A549 (cell line): ENCODE measurements at regions of chr10 and their contacts with region 1.

Region 1: DNA sequence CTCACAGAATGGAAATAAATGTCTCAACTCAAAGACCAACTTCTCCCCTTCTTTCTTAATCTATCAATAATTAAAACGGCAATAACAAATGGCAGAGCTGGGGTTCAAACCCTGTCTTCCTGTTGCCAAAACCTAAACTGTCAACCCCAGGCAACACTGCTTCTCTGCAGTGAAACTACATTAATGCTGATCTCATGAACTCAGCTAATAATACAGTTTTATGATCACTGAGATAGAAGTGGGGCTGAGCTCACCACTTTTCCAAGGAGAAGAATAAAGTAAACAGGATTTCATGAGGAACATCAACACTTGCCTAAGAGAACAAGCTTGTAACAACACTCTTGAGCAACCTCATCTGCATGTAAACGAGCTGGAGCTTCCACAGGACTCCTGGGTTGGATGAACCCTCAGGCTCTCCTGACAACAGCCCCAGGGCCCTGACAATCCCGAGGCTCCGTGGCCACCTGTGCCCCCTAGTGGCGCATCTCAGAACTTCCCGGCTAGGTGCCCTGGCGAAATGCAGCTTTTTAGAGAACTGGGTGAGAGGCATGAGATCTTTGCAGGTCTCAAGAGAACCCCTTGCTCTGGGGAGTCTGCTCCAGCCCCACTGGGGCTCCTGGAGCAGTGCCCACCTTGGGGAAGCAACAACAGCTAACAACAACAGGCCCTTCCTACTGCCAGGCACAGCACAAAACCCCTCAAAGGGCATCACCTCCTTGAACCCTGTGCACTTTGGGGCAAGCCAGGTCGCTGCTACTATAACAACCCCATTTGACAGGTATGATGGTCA is 169.3 kb downstream of the SH3PXD2A start:
- DNase-seq: peak; percentile 55 to 91
- ATAC-seq: peak; percentile 79 to 90
- H3K4me3 ChIP-seq: no peak overlapping the region
- H3K27ac ChIP-seq: no peak overlapping the region
- H3K4me1 ChIP-seq: peaks cover 14% of the 10 kb centered on the region
- CTCF ChIP-seq: peak; percentile 79
- EP300 ChIP-seq: no peak
- POLR2A ChIP-seq: no peak
- RAD21 ChIP-seq: peak; percentile 73 to 79

Region 2: DNA sequence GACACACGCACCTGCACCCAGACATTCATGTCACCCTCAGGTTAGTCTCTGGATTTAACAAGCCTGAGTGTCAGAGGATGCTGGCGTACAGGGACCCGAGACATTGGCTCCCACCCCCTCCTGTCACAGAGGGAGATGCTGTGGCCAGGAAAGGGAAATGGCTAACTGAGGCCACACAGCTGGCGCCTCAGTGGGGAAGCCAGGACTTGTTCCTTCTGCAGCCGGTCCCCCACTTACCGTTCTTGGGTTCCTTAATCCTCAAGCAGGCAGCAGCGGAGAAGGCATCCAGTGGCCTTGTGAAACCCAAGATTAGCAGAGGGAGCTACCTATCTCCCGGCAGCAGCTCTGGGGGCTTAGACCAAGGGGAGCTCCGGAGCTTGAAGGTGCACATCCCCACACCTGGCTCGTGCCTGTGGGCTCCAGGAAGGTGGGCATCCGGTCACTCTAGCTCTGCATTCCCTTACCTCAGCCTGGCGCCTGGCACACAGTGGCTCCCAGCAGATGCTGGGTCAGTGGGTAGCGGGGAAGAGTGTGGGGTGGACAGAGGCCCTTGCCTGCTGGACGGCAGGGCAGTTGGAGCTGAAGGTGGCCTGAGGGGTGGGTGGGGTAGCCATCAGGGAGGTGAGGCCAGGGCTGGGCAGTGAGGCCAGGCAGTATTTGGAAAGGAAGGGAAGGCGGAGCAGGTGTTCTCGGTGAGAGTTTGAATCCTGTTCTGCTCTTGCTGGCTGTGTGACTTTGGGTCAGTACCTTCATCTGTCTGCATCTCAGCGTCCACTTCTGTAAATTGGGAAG is 127.0 kb before region 1 on chr10:
- CTCF ChIA-PET with region 1: no interaction called
- POLR2A ChIA-PET with region 1: no interaction called
- DNase-seq: no peak
- ATAC-seq: no peak
- H3K4me3 ChIP-seq: no peak overlapping the region
- H3K27ac ChIP-seq: no peak overlapping the region
- H3K4me1 ChIP-seq: peaks cover 9% of the 10 kb centered on the region; the same call in 2 of the 3 replicates
- CTCF ChIP-seq: no peak
- EP300 ChIP-seq: no peak
- POLR2A ChIP-seq: no peak
- RAD21 ChIP-seq: no peak

Region 3: DNA sequence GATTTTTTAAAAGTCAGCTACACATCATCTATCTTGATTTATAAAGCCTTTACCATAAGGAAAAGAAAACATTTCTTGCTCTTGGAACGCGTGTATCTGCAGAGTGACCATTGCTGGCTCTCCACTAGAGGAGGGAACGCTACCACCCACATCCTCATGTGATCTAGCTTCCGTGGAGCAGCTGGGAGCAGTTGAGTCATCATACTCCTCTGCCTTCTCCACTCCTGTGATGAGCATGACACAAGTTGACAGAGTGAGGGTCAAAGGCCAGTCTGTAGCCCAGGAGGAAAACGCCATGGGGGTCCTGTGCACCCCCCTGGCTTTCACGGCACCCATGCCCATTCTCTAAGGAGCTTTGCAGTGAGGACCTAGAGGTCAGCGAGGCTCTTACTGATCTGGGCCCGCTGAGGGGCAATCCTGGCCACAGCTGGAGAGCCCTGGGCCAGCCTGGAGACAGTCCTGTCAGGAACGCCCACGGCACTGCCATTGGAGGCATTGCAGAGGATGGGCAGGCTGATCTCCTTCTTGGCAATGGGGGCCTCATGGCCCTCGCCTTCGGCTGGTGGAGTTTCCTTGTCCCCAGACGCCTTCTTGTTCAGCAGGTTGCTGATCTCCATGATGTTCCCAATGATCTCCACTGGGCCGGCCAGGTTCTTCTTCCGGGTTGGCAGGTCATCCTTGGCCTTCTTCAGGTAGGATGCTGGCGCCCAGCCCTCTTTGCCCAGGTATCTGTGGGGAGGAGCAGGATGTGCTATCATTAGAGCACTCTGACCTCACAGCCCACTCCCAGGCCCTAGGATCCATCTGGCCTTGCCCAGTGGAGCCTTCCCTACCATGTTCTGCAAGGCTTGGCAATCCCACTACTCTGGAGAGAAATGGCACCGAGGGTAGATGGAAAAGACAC is 73.4 kb before region 1 on chr10:
- CTCF ChIA-PET with region 1: interaction called, 31 read pairs
- POLR2A ChIA-PET with region 1: no interaction called
- DNase-seq: no peak
- ATAC-seq: no peak
- H3K4me3 ChIP-seq: no peak overlapping the region
- H3K27ac ChIP-seq: no peak overlapping the region
- H3K4me1 ChIP-seq: no peaks in the 10 kb centered on the region
- CTCF ChIP-seq: no peak
- EP300 ChIP-seq: no peak
- POLR2A ChIP-seq: no peak
- RAD21 ChIP-seq: no peak

Region 4: GRCh38 chr10:103637927-103638557 is 48.0 kb before region 1 on chr10:
- CTCF ChIA-PET with region 1: interaction called, 12 read pairs
- POLR2A ChIA-PET with region 1: no interaction called
- DNase-seq: no peak
- ATAC-seq: no peak
- H3K4me3 ChIP-seq: no peak overlapping the region
- H3K27ac ChIP-seq: no peak overlapping the region; a peak in 1 of 6 replicates
- H3K4me1 ChIP-seq: no peaks in the 10 kb centered on the region; the same call in 2 of the 3 replicates
- CTCF ChIP-seq: no peak
- EP300 ChIP-seq: no peak
- POLR2A ChIP-seq: no peak
- RAD21 ChIP-seq: no peak

Region 5: GRCh38 chr10:103648921-103649532 is 37.0 kb before region 1 on chr10:
- CTCF ChIA-PET with region 1: interaction called, 21 read pairs
- POLR2A ChIA-PET with region 1: no interaction called
- DNase-seq: no peak
- ATAC-seq: no peak
- H3K4me3 ChIP-seq: no peak overlapping the region
- H3K27ac ChIP-seq: no peak overlapping the region
- H3K4me1 ChIP-seq: no peaks in the 10 kb centered on the region
- CTCF ChIP-seq: no peak
- EP300 ChIP-seq: no peak
- POLR2A ChIP-seq: no peak
- RAD21 ChIP-seq: no peak

Region 6: GRCh38 chr10:103666087-103666761 is 19.9 kb before region 1 on chr10:
- CTCF ChIA-PET with region 1: interaction called, 22 read pairs
- POLR2A ChIA-PET with region 1: no interaction called
- DNase-seq: peak; percentile 54 to 79
- ATAC-seq: peak in 1 of 2 experiments; percentile 77; a peak in 3 of 6 replicates
- H3K4me3 ChIP-seq: no peak overlapping the region
- H3K27ac ChIP-seq: no peak overlapping the region
- H3K4me1 ChIP-seq: no peaks in the 10 kb centered on the region
- CTCF ChIP-seq: peak; percentile 35
- EP300 ChIP-seq: no peak
- POLR2A ChIP-seq: no peak
- RAD21 ChIP-seq: no peak

Region 7: GRCh38 chr10:103696411-103697145 is 10.5 kb after region 1 on chr10:
- CTCF ChIA-PET with region 1: interaction called, 38 read pairs
- POLR2A ChIA-PET with region 1: interaction called, 3 read pairs
- DNase-seq: peak; percentile 91 to 95
- ATAC-seq: peak; percentile 82 to 90
- H3K4me3 ChIP-seq: 0 out of 3 replicates have a peak overlapping the region, but pooled peaks have one; percentile 7
- H3K27ac ChIP-seq: peak overlapping the region; percentile 90 to 91
- H3K4me1 ChIP-seq: peaks cover 61% of the 10 kb centered on the region
- CTCF ChIP-seq: peak; percentile 34
- EP300 ChIP-seq: no peak
- POLR2A ChIP-seq: no peak
- RAD21 ChIP-seq: peak; percentile 15 to 18; a peak in 1 of 5 replicates

Region 8: DNA sequence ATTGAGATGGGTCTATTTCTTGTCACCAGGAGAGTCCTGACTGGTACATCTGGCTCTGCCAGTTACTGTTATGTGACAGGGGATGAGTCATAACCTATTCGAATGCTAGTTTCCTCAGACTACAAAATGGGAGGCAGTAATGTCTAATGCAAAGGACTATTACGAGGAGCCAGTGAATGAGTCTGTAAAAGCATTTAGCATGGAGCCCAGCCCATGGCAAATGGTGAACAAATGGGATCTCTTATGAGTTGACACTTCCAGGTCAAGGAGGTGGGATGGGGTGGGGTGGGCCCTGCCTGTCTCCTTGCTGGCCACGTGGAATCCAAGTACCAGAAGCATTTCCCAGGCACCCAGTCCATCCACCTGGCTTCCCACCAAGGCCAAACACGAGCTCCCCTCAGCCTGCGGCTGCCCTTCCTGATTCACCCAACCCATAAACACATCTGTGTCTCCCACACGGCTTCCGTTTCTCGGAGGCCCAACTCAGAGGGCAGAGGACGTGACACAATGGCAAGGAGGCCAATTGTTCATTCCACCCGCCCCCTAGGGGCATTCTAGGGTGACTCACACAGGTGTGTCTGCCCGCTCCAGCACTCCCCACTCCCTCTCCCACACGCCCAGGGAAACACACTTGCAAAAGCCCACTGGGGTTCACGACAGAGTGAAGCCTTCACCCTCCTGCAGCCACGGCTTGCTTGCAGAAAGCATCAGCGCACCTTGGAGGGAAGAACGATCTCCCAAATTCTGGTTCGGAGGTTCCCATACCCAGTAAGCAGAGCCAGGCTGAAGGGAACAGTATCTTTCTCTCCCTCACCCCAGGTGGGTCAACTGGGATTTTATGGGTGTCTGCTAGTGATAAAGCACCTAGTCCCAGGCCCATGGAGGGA is 59.5 kb after region 1 on chr10:
- CTCF ChIA-PET with region 1: no interaction called
- POLR2A ChIA-PET with region 1: no interaction called
- DNase-seq: no peak
- ATAC-seq: peak in 1 of 2 experiments; percentile 19; a peak in 1 of 6 replicates
- H3K4me3 ChIP-seq: no peak overlapping the region
- H3K27ac ChIP-seq: peak overlapping the region in 1 of 2 experiments; percentile 27; a peak in 1 of 6 replicates
- H3K4me1 ChIP-seq: peaks cover 12% of the 10 kb centered on the region
- CTCF ChIP-seq: no peak
- EP300 ChIP-seq: no peak
- POLR2A ChIP-seq: no peak
- RAD21 ChIP-seq: no peak